ENCODE measurements at regions of chr5 and their contacts with region 1.

Region 1: GRCh38 chr5:57163553-57164006 is 10.3 kb upstream of the GPBP1 start:
- DNase-seq: no peak
- ATAC-seq: no peak
- H3K4me3 Mint-ChIP-seq: no peak overlapping the region
- H3K27ac Mint-ChIP-seq: no peak overlapping the region
- H3K4me1 Mint-ChIP-seq: peaks cover 6% of the 10 kb centered on the region
- H3K27me3 Mint-ChIP-seq: no peaks in the 10 kb centered on the region
- CTCF ChIP-seq: no peak

Region 2: GRCh38 chr5:55391707-55392106 is 1771.9 kb before region 1 on chr5:
- CTCF ChIA-PET with region 1: no interaction called
- POLR2A ChIA-PET with region 1: no interaction called
- intact Hi-C with region 1: no loop called
- DNase-seq: no peak
- ATAC-seq: no peak
- H3K4me3 Mint-ChIP-seq: no peak overlapping the region
- H3K27ac Mint-ChIP-seq: no peak overlapping the region
- H3K4me1 Mint-ChIP-seq: no peaks in the 10 kb centered on the region
- H3K27me3 Mint-ChIP-seq: no peaks in the 10 kb centered on the region
- CTCF ChIP-seq: no peak

Region 3: GRCh38 chr5:57150681-57151080 is 12.9 kb before region 1 on chr5:
- CTCF ChIA-PET with region 1: no interaction called
- POLR2A ChIA-PET with region 1: no interaction called
- intact Hi-C with region 1: no loop called
- DNase-seq: no peak
- ATAC-seq: no peak
- H3K4me3 Mint-ChIP-seq: no peak overlapping the region
- H3K27ac Mint-ChIP-seq: no peak overlapping the region
- H3K4me1 Mint-ChIP-seq: no peaks in the 10 kb centered on the region
- H3K27me3 Mint-ChIP-seq: no peaks in the 10 kb centered on the region
- CTCF ChIP-seq: no peak

Region 4: DNA sequence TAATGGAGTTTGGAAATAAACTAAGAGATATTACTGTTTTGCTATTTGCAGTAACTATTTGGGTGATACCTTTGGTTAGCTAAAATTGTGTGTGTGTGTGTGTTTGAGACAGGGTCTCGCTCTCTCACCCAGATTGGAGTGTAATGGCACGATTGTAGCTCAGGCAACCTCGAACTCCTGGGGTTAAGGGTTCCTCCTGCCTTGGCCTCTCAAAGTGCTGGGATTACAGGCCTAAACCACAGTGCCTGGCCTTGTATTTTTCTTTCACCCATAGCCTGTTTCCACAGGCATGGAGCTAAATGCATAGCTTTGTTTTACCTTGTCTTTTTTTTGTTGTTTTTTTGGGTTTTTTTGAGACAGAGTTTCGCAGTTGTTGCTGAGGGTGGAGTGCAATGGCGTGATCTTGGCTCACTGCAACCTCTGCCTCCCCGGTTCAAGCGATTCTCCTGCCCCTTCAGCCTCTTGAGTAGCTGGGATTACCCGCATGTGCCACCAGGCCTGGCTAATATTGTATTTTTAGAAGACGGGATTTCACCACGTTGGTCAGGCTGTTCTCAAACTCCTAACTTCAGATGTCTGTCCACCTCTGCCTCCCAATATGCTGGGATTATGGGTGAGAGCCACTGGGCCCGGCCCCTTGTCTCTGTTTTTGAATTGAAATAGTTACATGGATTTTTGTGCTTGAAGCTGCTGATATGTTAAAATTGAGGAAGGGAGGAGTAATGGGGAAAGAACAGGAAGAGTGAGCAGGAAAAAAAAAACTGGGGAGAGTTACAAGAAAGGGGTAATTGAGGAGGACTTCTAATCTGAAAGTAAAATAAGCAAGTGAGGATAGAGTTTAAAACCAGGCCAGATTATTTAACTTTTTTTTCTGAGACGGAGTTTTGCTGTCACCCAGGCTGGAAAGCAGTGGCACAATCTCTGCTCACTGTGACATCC is 16.0 kb after region 1 on chr5:
- CTCF ChIA-PET with region 1: no interaction called
- POLR2A ChIA-PET with region 1: no interaction called
- intact Hi-C with region 1: no loop called
- DNase-seq: no peak
- ATAC-seq: no peak
- H3K4me3 Mint-ChIP-seq: peak overlapping the region; percentile 95
- H3K27ac Mint-ChIP-seq: peak overlapping the region; percentile 59
- H3K4me1 Mint-ChIP-seq: peaks cover 68% of the 10 kb centered on the region
- H3K27me3 Mint-ChIP-seq: no peaks in the 10 kb centered on the region
- CTCF ChIP-seq: no peak

Region 5: DNA sequence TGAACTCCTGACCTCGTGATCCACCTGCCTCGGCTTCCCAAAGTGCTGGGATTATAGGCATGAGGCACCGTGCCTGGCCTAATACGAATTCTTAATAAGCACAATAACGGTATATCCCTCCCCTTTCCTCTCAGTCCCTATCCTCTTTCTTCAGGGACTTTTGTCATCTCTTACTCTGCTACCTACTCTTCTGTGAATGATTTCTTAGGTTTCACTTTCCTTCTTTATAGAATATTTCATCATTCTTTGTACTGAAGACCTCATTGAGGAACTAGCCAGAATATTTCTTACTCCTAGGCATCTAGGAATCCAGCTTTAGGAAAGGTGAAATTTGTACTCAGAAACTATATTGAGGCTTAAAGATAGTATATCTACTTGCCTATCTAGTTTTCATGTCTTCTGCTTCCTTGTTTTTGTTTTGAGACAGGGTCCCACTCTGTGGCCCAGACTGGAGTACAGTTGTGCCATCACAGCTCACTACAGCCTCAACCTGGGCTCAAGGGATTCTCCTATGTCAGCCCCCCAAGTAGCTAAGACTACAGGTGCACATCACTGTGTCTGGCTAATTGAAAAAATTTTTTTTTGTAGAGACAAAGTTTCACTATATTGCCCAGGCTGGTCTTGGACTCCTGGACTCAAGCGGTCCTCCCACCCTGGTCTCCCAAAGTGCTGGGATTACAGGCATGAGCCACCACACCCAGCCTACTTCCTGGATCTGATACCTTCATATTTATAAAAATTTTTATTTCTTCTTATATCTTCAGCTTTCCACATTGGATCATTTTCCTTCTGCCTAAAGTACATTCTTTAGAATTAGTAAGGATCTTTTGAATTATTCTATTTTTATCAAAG is 79.9 kb after region 1 on chr5:
- CTCF ChIA-PET with region 1: no interaction called
- POLR2A ChIA-PET with region 1: interaction called, 19 read pairs
- intact Hi-C with region 1: no loop called
- DNase-seq: no peak
- ATAC-seq: no peak
- H3K4me3 Mint-ChIP-seq: no peak overlapping the region
- H3K27ac Mint-ChIP-seq: peak overlapping the region; percentile 36
- H3K4me1 Mint-ChIP-seq: peaks cover 2% of the 10 kb centered on the region
- H3K27me3 Mint-ChIP-seq: no peaks in the 10 kb centered on the region
- CTCF ChIP-seq: no peak